ENCODE measurements at regions of chr5 and their contacts with region 1.

Region 1: GRCh38 chr5:54905943-54906537 is 79.4 kb downstream of the ESM1 start:
- DNase-seq: peak; percentile 59 to 80 (median 73)
- H3K4me3 ChIP-seq: no peak overlapping the region
- H3K27ac ChIP-seq: no peak overlapping the region
- H3K4me1 ChIP-seq: peaks cover 3 to 27% (median 8%) of the 10 kb centered on the region in 4 experiments
- H3K27me3 ChIP-seq: peaks cover 0 to 9% (median 4%) of the 10 kb centered on the region in 5 experiments

Region 2: GRCh38 chr5:55146543-55147151 is 240.6 kb after region 1 on chr5:
- CTCF ChIA-PET with region 1: interaction called, 25 read pairs
- POLR2A ChIA-PET with region 1: no interaction called
- DNase-seq: peak; percentile 84 to 90 (median 86)
- H3K4me3 ChIP-seq: no peak overlapping the region
- H3K27ac ChIP-seq: no peak overlapping the region
- H3K4me1 ChIP-seq: peaks cover 0 to 5% (median 2%) of the 10 kb centered on the region in 4 experiments
- H3K27me3 ChIP-seq: peaks cover 0 to 3% (median 0%) of the 10 kb centered on the region in 5 experiments

Region 3: DNA sequence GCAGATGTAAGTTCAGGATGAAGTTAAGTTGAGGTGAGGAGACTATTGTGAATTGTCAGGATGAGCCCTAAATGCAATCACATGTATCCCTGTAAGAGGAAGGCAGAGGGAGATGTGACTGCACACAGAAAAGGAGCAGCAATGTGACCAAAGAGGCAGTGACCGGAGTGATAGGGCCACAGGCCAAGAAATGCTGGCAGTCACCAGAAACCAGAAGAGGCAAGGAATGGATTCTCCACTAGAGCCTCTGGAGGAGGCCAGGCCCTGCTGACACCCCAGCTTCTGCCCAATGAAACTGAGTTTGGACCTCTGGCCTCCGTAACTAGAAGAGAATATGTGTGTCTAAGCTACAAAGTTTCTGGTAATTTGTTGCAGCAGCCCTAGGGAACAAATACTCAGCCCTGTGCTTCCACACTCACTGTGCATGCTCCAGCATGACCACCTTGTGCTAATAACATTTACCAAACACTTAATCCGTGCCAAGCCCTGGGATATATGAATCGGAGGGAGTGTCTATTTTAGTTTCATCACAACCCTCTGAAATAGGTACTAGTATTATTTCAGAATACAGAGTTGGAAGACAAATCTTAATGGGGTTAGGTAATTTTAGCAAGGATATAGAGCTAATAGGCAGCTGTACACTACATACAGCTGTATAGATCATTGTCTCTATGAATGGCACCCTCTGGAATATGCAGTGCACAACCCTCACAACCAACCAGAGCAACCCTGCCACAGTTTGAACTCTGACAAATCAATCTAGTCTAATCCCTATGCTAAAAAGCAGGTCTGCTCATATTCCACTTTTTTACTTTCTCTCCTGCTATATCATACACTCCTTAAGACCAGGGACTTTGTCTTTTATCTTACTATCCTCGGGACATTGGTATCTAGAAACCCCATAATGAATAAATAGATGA is 246.1 kb after region 1 on chr5:
- CTCF ChIA-PET with region 1: interaction called, 20 read pairs
- POLR2A ChIA-PET with region 1: no interaction called
- DNase-seq: no peak
- H3K4me3 ChIP-seq: no peak overlapping the region
- H3K27ac ChIP-seq: no peak overlapping the region
- H3K4me1 ChIP-seq: no peaks in the 10 kb centered on the region
- H3K27me3 ChIP-seq: peaks cover 0 to 6% (median 4%) of the 10 kb centered on the region in 5 experiments

Region 4: DNA sequence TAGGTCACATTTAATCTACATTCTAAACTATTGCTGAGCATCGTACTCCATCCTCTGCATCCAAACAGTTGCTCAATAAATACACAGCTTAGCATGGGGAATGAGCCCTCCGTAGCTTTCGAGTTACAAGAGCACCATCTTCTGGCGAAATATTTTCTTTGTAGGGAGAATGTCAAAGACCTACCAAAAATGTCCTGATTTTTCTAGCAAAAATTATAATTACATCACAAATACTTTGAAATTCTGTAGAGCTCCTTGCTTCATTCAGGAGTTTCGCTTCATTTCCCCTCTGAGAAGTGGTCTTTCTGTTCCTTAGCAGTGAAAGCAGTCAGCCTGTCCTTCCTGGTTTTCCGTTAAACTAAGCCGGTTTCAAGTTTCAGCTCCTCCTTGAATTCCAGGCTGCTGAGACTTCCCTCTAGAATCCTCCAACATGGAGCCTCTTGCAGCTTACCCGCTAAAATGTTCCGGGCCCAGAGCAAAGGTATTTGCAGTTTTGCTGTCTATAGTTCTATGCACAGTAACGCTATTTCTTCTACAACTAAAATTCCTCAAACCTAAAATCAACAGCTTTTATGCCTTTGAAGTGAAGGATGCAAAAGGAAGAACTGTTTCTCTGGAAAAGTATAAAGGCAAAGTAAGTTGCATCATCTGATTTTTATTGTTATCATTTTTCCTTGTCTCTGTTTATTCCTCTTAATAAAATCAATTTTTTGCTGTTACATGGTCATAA is 253.9 kb after region 1 on chr5 and contains the start of gene GPX8:
- CTCF ChIA-PET with region 1: interaction called, 18 read pairs
- POLR2A ChIA-PET with region 1: no interaction called
- DNase-seq: peak; percentile 44 to 71 (median 64)
- H3K4me3 ChIP-seq: peak within 1 kb of the TSS in 1 of 7 experiments; percentile 49
- H3K27ac ChIP-seq: no peak within 1 kb of the TSS
- H3K4me1 ChIP-seq: peaks cover 0 to 5% (median 1%) of the 10 kb centered on the region in 4 experiments
- H3K27me3 ChIP-seq: peaks cover 0 to 17% (median 8%) of the 10 kb centered on the region in 5 experiments